ENCODE measurements at regions of chr1 and their contacts with region 1.

Region 1: DNA sequence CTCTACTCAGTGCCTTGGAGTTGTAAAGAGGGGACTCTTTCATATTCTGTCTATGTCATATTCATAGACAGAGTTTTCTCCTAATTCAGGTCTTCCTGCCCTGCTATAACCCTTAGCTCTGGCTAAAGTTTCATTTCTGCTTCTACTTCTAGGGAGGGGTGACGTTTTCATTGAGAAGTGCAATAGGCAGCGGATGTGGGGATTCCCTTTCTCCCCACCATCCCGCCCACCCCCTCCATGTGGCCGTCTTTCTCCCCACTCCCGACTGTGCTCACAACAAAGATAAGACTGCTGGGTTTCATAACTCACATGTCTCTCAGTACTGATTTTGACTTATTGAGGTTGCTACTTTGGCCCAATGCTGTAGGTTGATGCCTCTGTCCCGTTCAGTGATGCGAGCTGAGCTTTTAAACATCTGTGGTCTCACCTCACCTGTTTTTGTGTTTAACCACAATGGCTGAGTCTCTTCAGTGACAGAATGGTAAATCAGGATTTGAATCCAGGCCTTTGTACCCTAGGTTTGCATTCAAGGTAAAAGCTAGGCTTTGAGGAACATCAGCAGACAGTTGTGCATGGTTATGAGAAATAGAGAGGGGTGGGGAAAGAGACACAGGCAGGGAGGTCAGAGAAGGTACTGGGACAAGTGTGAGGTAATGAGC is 7.8 kb upstream of the KIF14 start:
- DNase-seq: no peak
- ATAC-seq: peak in 2 of 4 donors; percentile 37 to 46
- H3K4me3 ChIP-seq: no peak overlapping the region
- H3K27ac ChIP-seq: no peak overlapping the region
- H3K4me1 ChIP-seq: peaks cover 0 to 13% (median 0%) of the 10 kb centered on the region in 12 donors
- H3K27me3 ChIP-seq: no peaks in the 10 kb centered on the region
- CTCF ChIP-seq: no peak
- POLR2A ChIP-seq: no peak

Region 2: GRCh38 chr1:200660719-200661118 is 32.4 kb after region 1 on chr1:
- intact Hi-C with region 1: loop called in 2 of 10 experiments (anchors 5 kb)
- DNase-seq: peak in 4 of 5 donors; percentile 29 to 46 (median 34)
- ATAC-seq: peak in 1 of 4 donors; percentile 39
- H3K4me3 ChIP-seq: no peak overlapping the region
- H3K27ac ChIP-seq: no peak overlapping the region
- H3K4me1 ChIP-seq: peaks cover 0 to 25% (median 9%) of the 10 kb centered on the region in 12 donors
- H3K27me3 ChIP-seq: no peaks in the 10 kb centered on the region
- CTCF ChIP-seq: no peak
- POLR2A ChIP-seq: no peak

Measured in heart left ventricle (tissue), 16 donors.